ENCODE measurements at regions of chr14 and their contacts with region 1.

Region 1: DNA sequence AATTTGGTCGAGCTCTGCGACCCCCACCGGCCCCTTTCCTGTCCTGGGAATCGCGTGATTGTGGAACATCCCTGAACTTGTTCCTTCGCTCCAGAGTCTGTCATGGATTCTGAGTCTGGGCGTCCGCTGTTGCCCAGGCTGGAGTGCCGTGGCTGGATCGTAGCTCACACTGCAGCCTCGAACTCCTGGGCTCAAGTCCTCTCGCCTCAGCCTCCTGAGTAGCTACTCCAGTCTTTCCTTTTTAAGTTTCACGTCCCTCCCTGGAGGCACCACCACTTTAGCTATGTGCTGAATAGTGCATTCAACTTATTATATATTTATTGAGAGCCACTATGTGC is 698 bp downstream of the ACOT6 start:
- DNase-seq: no peak
- ATAC-seq: no peak
- H3K4me3 ChIP-seq: peak overlapping the region; percentile 73
- H3K4me3 Mint-ChIP-seq: peak overlapping the region; percentile 82 to 90 (median 88)
- H3K27ac ChIP-seq: peak overlapping the region; percentile 65
- H3K27ac Mint-ChIP-seq: peak overlapping the region; percentile 72 to 90 (median 84)
- H3K4me1 ChIP-seq: no peaks in the 10 kb centered on the region
- H3K4me1 Mint-ChIP-seq: peaks cover 0 to 14% (median 0%) of the 10 kb centered on the region in 7 donors
- H3K27me3 ChIP-seq: no peaks in the 10 kb centered on the region
- H3K27me3 Mint-ChIP-seq: peaks cover 0 to 10% (median 0%) of the 10 kb centered on the region in 5 donors

Region 2: GRCh38 chr14:72651081-72651480 is 961.9 kb before region 1 on chr14:
- CTCF ChIA-PET with region 1: no interaction called
- POLR2A ChIA-PET with region 1: no interaction called
- intact Hi-C with region 1: no loop called
- DNase-seq: no peak
- ATAC-seq: no peak
- H3K4me3 ChIP-seq: no peak overlapping the region
- H3K4me3 Mint-ChIP-seq: no peak overlapping the region
- H3K27ac ChIP-seq: no peak overlapping the region
- H3K27ac Mint-ChIP-seq: no peak overlapping the region
- H3K4me1 ChIP-seq: no peaks in the 10 kb centered on the region
- H3K4me1 Mint-ChIP-seq: peaks cover 0 to 6% (median 0%) of the 10 kb centered on the region in 7 donors
- H3K27me3 ChIP-seq: no peaks in the 10 kb centered on the region
- H3K27me3 Mint-ChIP-seq: peaks cover 0 to 18% (median 1%) of the 10 kb centered on the region in 5 donors

Region 3: GRCh38 chr14:73591690-73592448 is 21.1 kb before region 1 on chr14 and contains the start of gene ACOT4:
- CTCF ChIA-PET with region 1: no interaction called
- POLR2A ChIA-PET with region 1: interaction called, 18 read pairs
- intact Hi-C with region 1: loop called (anchors 1 kb)
- DNase-seq: peak; percentile 43 to 77 (median 73)
- ATAC-seq: peak; percentile 93
- H3K4me3 ChIP-seq: peak within 1 kb of the TSS; percentile 74
- H3K4me3 Mint-ChIP-seq: peak within 1 kb of the TSS; percentile 61 to 87 (median 79)
- H3K27ac ChIP-seq: peak within 1 kb of the TSS; percentile 63
- H3K27ac Mint-ChIP-seq: peak within 1 kb of the TSS in 8 of 9 donors; percentile 29 to 89 (median 70)
- H3K4me1 ChIP-seq: no peaks in the 10 kb centered on the region
- H3K4me1 Mint-ChIP-seq: peaks cover 0 to 19% (median 5%) of the 10 kb centered on the region in 7 donors
- H3K27me3 ChIP-seq: no peaks in the 10 kb centered on the region
- H3K27me3 Mint-ChIP-seq: peaks cover 0 to 10% (median 0%) of the 10 kb centered on the region in 5 donors
- total RNA-seq, gene ACOT4: 0.69 to 1.0 (median 0.89) TPM

Region 4: GRCh38 chr14:73644531-73645247 is 31.7 kb after region 1 on chr14 and contains the start of gene DNAL1:
- CTCF ChIA-PET with region 1: no interaction called
- POLR2A ChIA-PET with region 1: interaction called, 5 read pairs
- intact Hi-C with region 1: loop called in 1 of 2 experiments (anchors 1 kb)
- DNase-seq: peak; percentile 80 to 93 (median 86)
- ATAC-seq: peak; percentile 99
- H3K4me3 ChIP-seq: peak within 1 kb of the TSS; percentile 92
- H3K4me3 Mint-ChIP-seq: peak within 1 kb of the TSS; percentile 89 to 99 (median 94)
- H3K27ac ChIP-seq: peak within 1 kb of the TSS; percentile 80
- H3K27ac Mint-ChIP-seq: peak within 1 kb of the TSS; percentile 86 to 98 (median 93)
- H3K4me1 ChIP-seq: peaks cover 7 to 9% of the 10 kb centered on the region in 2 donors
- H3K4me1 Mint-ChIP-seq: peaks cover 8 to 20% (median 16%) of the 10 kb centered on the region in 7 donors
- H3K27me3 ChIP-seq: no peaks in the 10 kb centered on the region
- H3K27me3 Mint-ChIP-seq: no peaks in the 10 kb centered on the region
- total RNA-seq, gene DNAL1: 3.6 to 8.4 (median 6.5) TPM

Region 5: GRCh38 chr14:74018586-74019407 is 405.8 kb after region 1 on chr14 and contains the starts of genes BBOF1 and ENTPD5:
- CTCF ChIA-PET with region 1: no interaction called
- POLR2A ChIA-PET with region 1: no interaction called
- intact Hi-C with region 1: loop called in 1 of 2 experiments (anchors 2 kb)
- DNase-seq: peak; percentile 83 to 89 (median 88)
- ATAC-seq: peak; percentile 98
- H3K4me3 ChIP-seq: peak within 1 kb of the TSS; percentile 79
- H3K4me3 Mint-ChIP-seq: peak within 1 kb of the TSS; percentile 80 to 97 (median 94)
- H3K27ac ChIP-seq: peak within 1 kb of the TSS; percentile 93
- H3K27ac Mint-ChIP-seq: peak within 1 kb of the TSS; percentile 89 to 98 (median 96)
- H3K4me1 ChIP-seq: peaks cover 6 to 10% of the 10 kb centered on the region in 2 donors
- H3K4me1 Mint-ChIP-seq: peaks cover 7 to 24% (median 14%) of the 10 kb centered on the region in 7 donors
- H3K27me3 ChIP-seq: no peaks in the 10 kb centered on the region
- H3K27me3 Mint-ChIP-seq: peaks cover 0 to 2% (median 0%) of the 10 kb centered on the region in 5 donors
- total RNA-seq, gene BBOF1: 0.80 to 4.0 (median 2.6) TPM
- total RNA-seq, gene ENTPD5: 8.6 to 17.1 (median 11.2) TPM